ENCODE measurements at regions of chr21 and their contacts with region 1.

Region 1: GRCh38 chr21:14864211-14865021 is 200.4 kb downstream of the NRIP1 start:
- DNase-seq: no peak
- H3K4me3 ChIP-seq: no peak overlapping the region
- H3K27me3 ChIP-seq: no peaks in the 10 kb centered on the region
- CTCF ChIP-seq: peak; percentile 75

Region 2: DNA sequence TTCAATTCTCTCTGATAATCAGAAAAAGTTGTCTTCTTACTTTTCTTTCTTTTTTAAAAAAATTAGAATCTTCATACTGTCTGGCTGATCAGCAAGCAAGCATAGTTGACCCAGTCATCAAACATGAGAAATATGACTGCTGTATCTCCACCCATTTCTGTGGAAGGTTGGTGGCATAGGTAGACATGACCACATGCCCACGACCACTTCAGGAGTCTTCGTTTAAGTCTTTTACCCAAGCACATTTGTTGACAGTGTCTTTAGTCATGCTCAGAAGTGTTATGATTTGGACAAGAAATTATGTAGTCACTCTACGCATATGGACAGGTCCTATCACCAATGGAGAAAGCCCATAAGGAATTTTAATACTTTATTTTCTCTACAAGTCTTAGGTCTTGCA is 406.7 kb before region 1 on chr21:
- CTCF ChIA-PET with region 1: no interaction called
- POLR2A ChIA-PET with region 1: no interaction called
- DNase-seq: no peak
- H3K4me3 ChIP-seq: no peak overlapping the region
- H3K27me3 ChIP-seq: no peaks in the 10 kb centered on the region
- CTCF ChIP-seq: no peak

Region 3: GRCh38 chr21:14722841-14723483 is 141.5 kb before region 1 on chr21:
- CTCF ChIA-PET with region 1: no interaction called
- POLR2A ChIA-PET with region 1: no interaction called
- DNase-seq: no peak
- H3K4me3 ChIP-seq: no peak overlapping the region
- H3K27me3 ChIP-seq: no peaks in the 10 kb centered on the region
- CTCF ChIP-seq: no peak

Region 4: DNA sequence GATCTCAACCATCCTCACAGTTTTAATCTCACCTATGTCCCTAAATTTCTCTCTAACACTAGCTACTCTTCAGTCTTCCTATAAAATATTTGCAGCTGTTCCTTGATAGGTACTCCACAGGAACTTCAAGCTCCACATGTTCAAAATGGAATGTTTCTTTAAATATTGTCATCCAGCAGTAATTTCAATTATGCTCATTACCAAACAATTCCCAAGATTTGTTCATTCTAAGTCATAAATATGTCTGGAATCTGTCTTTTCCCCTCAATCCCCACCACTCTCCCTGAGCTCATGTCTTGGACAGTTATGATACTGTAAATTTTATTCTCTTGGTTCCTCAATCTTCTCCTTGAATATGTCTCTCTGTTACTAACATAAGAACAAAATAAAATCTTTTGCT is 14.0 kb before region 1 on chr21:
- CTCF ChIA-PET with region 1: interaction called, 10 read pairs
- POLR2A ChIA-PET with region 1: no interaction called
- DNase-seq: peak; percentile 47
- H3K4me3 ChIP-seq: no peak overlapping the region
- H3K27me3 ChIP-seq: no peaks in the 10 kb centered on the region
- CTCF ChIP-seq: no peak

Region 5: GRCh38 chr21:14956807-14957206 is 92.4 kb after region 1 on chr21:
- CTCF ChIA-PET with region 1: interaction called, 10 read pairs
- POLR2A ChIA-PET with region 1: interaction called, 13 read pairs
- DNase-seq: peak; percentile 46
- H3K4me3 ChIP-seq: no peak overlapping the region
- H3K27me3 ChIP-seq: no peaks in the 10 kb centered on the region
- CTCF ChIP-seq: no peak

Region 6: GRCh38 chr21:15064576-15065391 is 200.4 kb after region 1 on chr21 and contains the start of gene NRIP1:
- CTCF ChIA-PET with region 1: interaction called, 11 read pairs
- POLR2A ChIA-PET with region 1: no interaction called
- DNase-seq: peak; percentile 50
- H3K4me3 ChIP-seq: peak within 1 kb of the TSS; percentile 65
- H3K27me3 ChIP-seq: no peaks in the 10 kb centered on the region
- CTCF ChIP-seq: no peak
- polyA plus RNA-seq, gene NRIP1: 5.2 and 12.0 TPM in 2 replicates

Region 7: GRCh38 chr21:15483138-15483780 is 618.8 kb after region 1 on chr21:
- CTCF ChIA-PET with region 1: interaction called, 24 read pairs
- POLR2A ChIA-PET with region 1: no interaction called
- DNase-seq: peak; percentile 23
- H3K4me3 ChIP-seq: no peak overlapping the region
- H3K27me3 ChIP-seq: no peaks in the 10 kb centered on the region
- CTCF ChIP-seq: peak; percentile 92